Heart right ventricle (tissue), 16 donors: ENCODE measurements at regions of chr20 and their contacts with region 1.

Region 1: GRCh38 chr20:63973636-63974402 is 4.1 kb upstream of the ZNF512B start:
- DNase-seq: peak; percentile 88 to 92
- ATAC-seq: peak; percentile 77 to 90 (median 87)
- H3K4me3 ChIP-seq: peak overlapping the region in 8 of 10 donors; percentile 23 to 45 (median 34)
- H3K27ac ChIP-seq: peak overlapping the region in 6 of 10 donors; percentile 29 to 67 (median 55)
- H3K4me1 ChIP-seq: peaks cover 11 to 51% (median 45%) of the 10 kb centered on the region in 9 donors
- H3K27me3 ChIP-seq: no peaks in the 10 kb centered on the region
- CTCF ChIP-seq: peak; percentile 97 to 100 (median 99)

Region 2: DNA sequence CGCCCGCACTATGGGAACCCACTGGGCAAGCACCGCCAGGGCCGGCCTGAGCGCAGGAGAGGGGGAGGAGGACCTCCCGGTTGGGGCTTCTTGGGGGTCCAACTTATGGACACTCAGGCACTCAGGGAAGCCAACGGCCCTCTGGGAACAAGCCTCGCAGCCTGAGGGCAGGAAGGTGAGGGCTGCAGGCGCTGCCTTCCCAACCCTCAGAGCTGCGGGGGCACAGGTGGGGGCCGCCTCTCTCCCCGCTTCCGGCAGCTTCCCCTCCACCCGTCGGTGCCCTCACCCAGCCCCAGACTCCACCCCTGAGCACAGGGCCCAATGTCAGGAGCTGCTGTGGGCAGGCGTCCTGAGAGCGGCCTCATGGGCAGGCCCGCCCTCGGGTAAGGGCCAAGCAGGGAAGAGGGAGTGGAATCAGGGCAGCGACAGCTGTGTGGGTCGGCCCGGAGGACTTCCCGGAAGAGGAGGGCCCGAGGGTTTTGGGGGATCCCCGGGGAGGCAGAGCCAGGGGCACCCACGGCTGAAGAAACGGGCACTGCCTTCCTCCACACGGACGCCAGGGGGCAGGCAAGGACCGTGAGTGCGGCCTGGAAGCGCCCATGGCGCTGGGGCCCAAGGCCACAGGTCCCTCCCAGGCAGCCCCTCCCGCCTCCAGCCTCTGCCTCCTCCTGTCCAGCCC is 436.2 kb before region 1 on chr20:
- intact Hi-C with region 1: loop called (anchors 1 to 5 kb)
- DNase-seq: peak; percentile 80 to 87
- ATAC-seq: peak; percentile 86 to 93 (median 88)
- H3K4me3 ChIP-seq: peak overlapping the region in 9 of 10 donors; percentile 6 to 51 (median 31)
- H3K27ac ChIP-seq: peak overlapping the region in 7 of 10 donors; percentile 34 to 91 (median 57)
- H3K4me1 ChIP-seq: peaks cover 0 to 34% (median 16%) of the 10 kb centered on the region in 9 donors
- H3K27me3 ChIP-seq: peaks cover 0 to 38% (median 20%) of the 10 kb centered on the region in 7 donors
- CTCF ChIP-seq: peak; percentile 93 to 99 (median 97)

Region 3: GRCh38 chr20:63775096-63775978 is 198.5 kb before region 1 on chr20:
- intact Hi-C with region 1: loop called in 5 of 10 experiments (anchors 5 to 10 kb)
- DNase-seq: peak in 1 of 2 donors; percentile 55
- ATAC-seq: peak in 6 of 8 donors; percentile 25 to 40 (median 36)
- H3K4me3 ChIP-seq: peak overlapping the region in 2 of 10 donors; percentile 17 to 18
- H3K27ac ChIP-seq: peak overlapping the region in 1 of 10 donors; percentile 40
- H3K4me1 ChIP-seq: peaks cover 0 to 38% (median 13%) of the 10 kb centered on the region in 9 donors
- H3K27me3 ChIP-seq: no peaks in the 10 kb centered on the region
- CTCF ChIP-seq: peak; percentile 40 to 76 (median 65)

Region 4: DNA sequence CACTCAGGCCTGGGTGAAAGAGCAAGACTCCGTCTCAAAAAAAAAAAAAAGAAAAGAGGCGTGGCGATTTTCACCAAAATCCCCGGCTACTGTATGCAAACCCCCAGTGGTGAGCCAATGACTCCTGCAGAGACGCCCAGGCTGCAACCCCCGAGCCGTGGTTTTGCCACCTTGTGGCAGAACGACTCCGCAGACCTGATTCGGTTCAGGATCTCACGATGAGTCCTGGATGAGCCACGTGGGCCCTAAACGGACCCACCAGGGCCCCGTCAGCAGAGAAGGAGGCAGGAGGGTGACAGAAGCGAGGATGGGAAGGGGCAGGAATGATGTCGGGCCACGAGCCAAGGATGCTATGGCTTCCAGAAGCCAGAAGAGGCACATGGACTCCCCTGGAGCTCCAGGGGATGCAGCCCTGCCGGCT is 191.8 kb before region 1 on chr20:
- intact Hi-C with region 1: loop called in 5 of 10 experiments (anchors 5 to 10 kb)
- DNase-seq: no peak
- ATAC-seq: no peak
- H3K4me3 ChIP-seq: no peak overlapping the region
- H3K27ac ChIP-seq: no peak overlapping the region
- H3K4me1 ChIP-seq: peaks cover 3 to 24% (median 15%) of the 10 kb centered on the region in 9 donors
- H3K27me3 ChIP-seq: no peaks in the 10 kb centered on the region
- CTCF ChIP-seq: no peak

Region 5: DNA sequence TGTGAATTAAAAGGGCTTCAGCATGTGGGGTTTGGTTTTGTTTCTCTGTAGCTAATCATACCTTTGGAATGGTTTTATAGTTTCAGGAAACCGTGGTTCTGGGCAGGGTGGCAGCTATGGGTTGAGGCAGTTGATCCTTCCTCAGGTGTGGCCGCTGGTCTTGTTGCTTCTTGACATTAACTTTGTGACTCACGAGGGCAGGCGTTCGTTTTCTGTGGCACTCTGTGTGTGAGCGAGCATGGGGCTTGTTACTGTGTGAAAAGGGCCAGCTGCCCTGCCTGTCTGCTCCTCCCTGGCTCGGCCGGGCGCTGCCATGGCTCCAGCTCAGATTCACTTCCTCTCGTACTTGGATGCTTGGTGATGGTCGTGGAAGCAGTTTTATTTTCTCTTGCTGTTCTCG is 62.6 kb before region 1 on chr20:
- intact Hi-C with region 1: loop called in 8 of 10 experiments (anchors 2 to 10 kb)
- DNase-seq: no peak
- ATAC-seq: peak in 3 of 8 donors; percentile 29 to 32 (median 30)
- H3K4me3 ChIP-seq: no peak overlapping the region
- H3K27ac ChIP-seq: no peak overlapping the region
- H3K4me1 ChIP-seq: peaks cover 0 to 67% (median 50%) of the 10 kb centered on the region in 9 donors
- H3K27me3 ChIP-seq: no peaks in the 10 kb centered on the region
- CTCF ChIP-seq: no peak